ENCODE measurements at regions of chr18 and their contacts with region 1.

Region 1: GRCh38 chr18:5057386-5058348 is 139.4 kb downstream of the AKAIN1 start:
- ATAC-seq: peak; percentile 70 to 85 (median 80)
- H3K4me3 ChIP-seq: no peak overlapping the region
- H3K27ac ChIP-seq: no peak overlapping the region
- H3K4me1 ChIP-seq: no peaks in the 10 kb centered on the region

Region 2: DNA sequence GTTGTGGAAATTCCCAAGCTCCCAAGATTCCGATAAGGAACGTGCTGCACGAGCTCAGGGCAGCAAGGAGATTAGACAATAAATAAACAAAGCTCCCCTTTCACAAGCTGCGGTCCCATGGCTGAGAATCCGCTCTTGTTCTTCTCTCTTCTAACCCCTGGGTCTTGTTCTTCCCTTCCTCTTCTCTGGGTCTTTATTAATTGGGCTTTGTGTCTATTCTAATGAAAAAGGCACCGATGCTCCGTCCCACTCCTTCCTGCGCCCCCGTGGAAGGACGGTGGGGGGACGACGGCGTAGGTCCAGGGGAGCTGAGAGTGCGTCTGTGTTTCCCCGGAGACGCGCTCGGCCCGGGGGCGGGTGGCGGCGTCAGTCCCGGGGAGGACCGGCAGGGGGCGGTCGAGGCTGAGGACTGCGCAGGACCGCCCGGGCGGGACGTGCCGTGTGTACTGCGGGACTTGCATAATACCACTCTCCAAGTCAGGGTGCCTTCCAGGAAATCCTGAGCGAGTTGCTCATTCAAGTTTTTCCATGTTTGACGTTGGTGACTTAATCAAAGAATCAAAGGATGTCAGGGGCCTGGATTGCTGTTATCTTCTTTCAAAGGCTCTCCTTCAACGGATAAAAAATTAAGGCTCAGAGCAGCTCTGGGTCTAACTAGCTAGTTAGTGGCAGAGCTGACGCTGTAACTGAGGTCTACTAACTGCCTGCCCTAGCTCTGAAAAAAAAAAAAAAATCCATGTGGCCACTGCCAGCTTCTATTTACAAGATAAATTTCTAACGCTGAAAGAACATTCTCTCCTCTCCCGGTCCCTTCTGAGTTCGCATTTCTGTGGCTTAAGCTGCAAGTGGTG is 1286.3 kb before region 1 on chr18:
- in situ Hi-C with region 1: loop called in 1 of 9 experiments (anchors 25 kb)
- ATAC-seq: peak; percentile 98 to 100 (median 99)
- H3K4me3 ChIP-seq: peak overlapping the region; percentile 19 to 35 (median 28)
- H3K27ac ChIP-seq: no peak overlapping the region
- H3K4me1 ChIP-seq: peaks cover 0 to 3% of the 10 kb centered on the region in 2 donors